Activated CD8-positive, alpha-beta T cell treated with anti-CD3 and anti-CD28 coated beads for 36 hours (primary cell): ENCODE measurements at regions of chrX and their contacts with region 1.

Region 1: GRCh38 chrX:79140731-79141130 is 3.8 kb upstream of the GPR174 start:
- DNase-seq: no peak
- ATAC-seq: no peak
- H3K4me3 Mint-ChIP-seq: no peak overlapping the region
- H3K27ac Mint-ChIP-seq: no peak overlapping the region
- H3K4me1 Mint-ChIP-seq: peaks cover 38% of the 10 kb centered on the region
- H3K27me3 Mint-ChIP-seq: no peaks in the 10 kb centered on the region
- CTCF ChIP-seq: no peak

Region 2: DNA sequence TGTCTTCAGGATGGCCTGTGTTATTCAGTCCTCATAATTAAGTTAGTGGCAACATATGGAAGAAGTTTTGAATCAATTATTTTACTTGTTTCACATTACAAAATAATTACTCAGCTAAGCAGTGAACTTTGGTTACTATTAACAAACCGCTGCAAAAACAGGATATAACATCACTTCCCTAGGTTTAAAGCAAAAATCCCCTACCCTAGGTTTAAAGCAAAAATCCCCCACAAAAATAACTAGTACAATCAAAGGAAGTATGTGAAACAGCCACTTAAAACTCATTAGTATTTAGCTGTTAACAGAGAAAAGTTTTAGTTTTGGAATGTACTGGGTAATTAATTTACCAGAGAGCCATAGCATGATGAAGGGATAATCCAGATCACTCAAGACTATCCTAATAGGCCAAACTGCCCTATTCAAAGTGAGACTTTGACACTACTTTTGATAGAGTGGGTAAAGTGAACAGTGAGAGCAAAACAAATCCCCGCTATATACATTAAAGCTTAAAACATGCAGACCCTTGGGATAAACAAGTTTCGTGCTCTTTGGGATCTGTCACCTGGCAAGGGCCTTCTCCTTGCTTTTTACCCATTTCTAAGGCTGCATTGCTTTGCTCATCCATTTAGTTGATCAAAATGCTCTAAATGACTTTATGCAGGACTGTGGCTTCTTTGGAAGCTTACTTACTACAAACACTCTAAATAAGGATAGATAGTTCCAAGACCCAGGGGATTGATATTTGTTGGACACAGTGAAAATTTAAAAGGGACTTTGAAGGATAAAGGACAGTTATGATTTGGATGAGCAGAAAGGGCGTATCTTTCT is 32.6 kb before region 1 on chrX:
- CTCF ChIA-PET with region 1: interaction called, 4 read pairs
- POLR2A ChIA-PET with region 1: interaction called, 3 read pairs
- intact Hi-C with region 1: loop called (anchors 5 kb)
- DNase-seq: no peak
- ATAC-seq: peak; percentile 81
- H3K4me3 Mint-ChIP-seq: peak overlapping the region; percentile 45
- H3K27ac Mint-ChIP-seq: peak overlapping the region; percentile 98
- H3K4me1 Mint-ChIP-seq: peaks cover 57% of the 10 kb centered on the region
- H3K27me3 Mint-ChIP-seq: no peaks in the 10 kb centered on the region
- CTCF ChIP-seq: no peak